ENCODE measurements at regions of chr2 and their contacts with region 1.

Region 1: GRCh38 chr2:224837558-224837957 is 121.4 kb upstream of the CCDC195 start:
- DNase-seq: peak; percentile 95
- H3K4me3 ChIP-seq: peak overlapping the region in 1 of 3 experiments; percentile 49
- H3K27ac ChIP-seq: peak overlapping the region; percentile 100
- H3K4me1 ChIP-seq: peaks cover 29% of the 10 kb centered on the region
- H3K27me3 ChIP-seq: no peaks in the 10 kb centered on the region
- CTCF ChIP-seq: peak; percentile 1 to 10
- POLR2A ChIP-seq: peak; percentile 65

Region 2: GRCh38 chr2:224585205-224586088 is 252.1 kb before region 1 on chr2 and contains the start of gene CUL3:
- CTCF ChIA-PET with region 1: no interaction called
- POLR2A ChIA-PET with region 1: no interaction called
- dilution Hi-C with region 1: no loop called
- intact Hi-C with region 1: loop called (anchors 1 kb)
- DNase-seq: peak; percentile 98
- H3K4me3 ChIP-seq: peak within 1 kb of the TSS; percentile 69 to 96 (median 85)
- H3K27ac ChIP-seq: peak within 1 kb of the TSS; percentile 74
- H3K4me1 ChIP-seq: peaks cover 18% of the 10 kb centered on the region
- H3K27me3 ChIP-seq: no peaks in the 10 kb centered on the region
- CTCF ChIP-seq: no peak
- POLR2A ChIP-seq: peak; percentile 62
- total RNA-seq, gene CUL3: 82.3 and 87.1 TPM in 2 replicates

Region 3: DNA sequence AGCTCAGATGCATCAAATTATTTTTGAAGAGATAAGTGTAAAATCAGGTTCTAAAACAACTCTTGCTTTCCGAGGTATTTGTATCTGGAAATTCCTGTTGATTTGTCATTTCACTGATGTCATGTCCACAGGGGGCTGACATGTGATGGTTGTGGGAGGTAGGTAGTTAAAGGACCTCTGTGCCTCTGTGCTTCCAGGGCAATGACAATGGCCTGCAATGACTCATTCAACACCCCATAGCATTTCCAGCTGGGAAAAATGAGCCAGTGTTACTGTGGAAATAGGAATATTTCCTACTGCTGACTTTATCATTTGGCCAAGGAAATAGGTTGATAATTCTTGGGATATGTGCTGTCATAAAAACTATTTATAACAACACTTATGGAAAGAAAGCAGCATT is 35.2 kb before region 1 on chr2:
- CTCF ChIA-PET with region 1: interaction called, 3 read pairs
- POLR2A ChIA-PET with region 1: no interaction called
- dilution Hi-C with region 1: no loop called
- intact Hi-C with region 1: loop called (anchors 2 kb)
- DNase-seq: peak; percentile 69
- H3K4me3 ChIP-seq: no peak overlapping the region
- H3K27ac ChIP-seq: peak overlapping the region; percentile 83
- H3K4me1 ChIP-seq: peaks cover 13% of the 10 kb centered on the region
- H3K27me3 ChIP-seq: no peaks in the 10 kb centered on the region
- CTCF ChIP-seq: no peak
- POLR2A ChIP-seq: no peak

Region 4: GRCh38 chr2:224865016-224865415 is 27.5 kb after region 1 on chr2:
- CTCF ChIA-PET with region 1: no interaction called
- POLR2A ChIA-PET with region 1: no interaction called
- dilution Hi-C with region 1: no loop called
- intact Hi-C with region 1: no loop called
- DNase-seq: no peak
- H3K4me3 ChIP-seq: no peak overlapping the region
- H3K27ac ChIP-seq: no peak overlapping the region
- H3K4me1 ChIP-seq: no peaks in the 10 kb centered on the region
- H3K27me3 ChIP-seq: no peaks in the 10 kb centered on the region
- CTCF ChIP-seq: no peak
- POLR2A ChIP-seq: no peak

Region 5: GRCh38 chr2:224882291-224883171 is 45.0 kb after region 1 on chr2:
- CTCF ChIA-PET with region 1: no interaction called
- POLR2A ChIA-PET with region 1: no interaction called
- dilution Hi-C with region 1: no loop called
- intact Hi-C with region 1: loop called (anchors 1 kb)
- DNase-seq: peak; percentile 82
- H3K4me3 ChIP-seq: no peak overlapping the region
- H3K27ac ChIP-seq: peak overlapping the region; percentile 81
- H3K4me1 ChIP-seq: peaks cover 28% of the 10 kb centered on the region
- H3K27me3 ChIP-seq: no peaks in the 10 kb centered on the region
- CTCF ChIP-seq: no peak
- POLR2A ChIP-seq: no peak

Region 6: GRCh38 chr2:224938651-224939182 is 101.2 kb after region 1 on chr2:
- CTCF ChIA-PET with region 1: interaction called, 3 read pairs
- POLR2A ChIA-PET with region 1: no interaction called
- dilution Hi-C with region 1: no loop called
- intact Hi-C with region 1: loop called (anchors 2 kb)
- DNase-seq: peak; percentile 94
- H3K4me3 ChIP-seq: peak overlapping the region in 1 of 3 experiments; percentile 4
- H3K27ac ChIP-seq: peak overlapping the region; percentile 47
- H3K4me1 ChIP-seq: peaks cover 44% of the 10 kb centered on the region
- H3K27me3 ChIP-seq: no peaks in the 10 kb centered on the region
- CTCF ChIP-seq: no peak
- POLR2A ChIP-seq: no peak

Region 7: GRCh38 chr2:225735844-225736243 is 898.3 kb after region 1 on chr2:
- CTCF ChIA-PET with region 1: no interaction called
- POLR2A ChIA-PET with region 1: no interaction called
- dilution Hi-C with region 1: no loop called
- intact Hi-C with region 1: loop called (anchors 5 kb)
- DNase-seq: peak; percentile 89
- H3K4me3 ChIP-seq: no peak overlapping the region
- H3K27ac ChIP-seq: peak overlapping the region; percentile 34
- H3K4me1 ChIP-seq: peaks cover 44% of the 10 kb centered on the region
- H3K27me3 ChIP-seq: no peaks in the 10 kb centered on the region
- CTCF ChIP-seq: no peak
- POLR2A ChIP-seq: no peak

Measured in endothelial cell of umbilical vein (primary cell).